ENCODE measurements at regions of chr2 and their contacts with region 1.

Region 1: DNA sequence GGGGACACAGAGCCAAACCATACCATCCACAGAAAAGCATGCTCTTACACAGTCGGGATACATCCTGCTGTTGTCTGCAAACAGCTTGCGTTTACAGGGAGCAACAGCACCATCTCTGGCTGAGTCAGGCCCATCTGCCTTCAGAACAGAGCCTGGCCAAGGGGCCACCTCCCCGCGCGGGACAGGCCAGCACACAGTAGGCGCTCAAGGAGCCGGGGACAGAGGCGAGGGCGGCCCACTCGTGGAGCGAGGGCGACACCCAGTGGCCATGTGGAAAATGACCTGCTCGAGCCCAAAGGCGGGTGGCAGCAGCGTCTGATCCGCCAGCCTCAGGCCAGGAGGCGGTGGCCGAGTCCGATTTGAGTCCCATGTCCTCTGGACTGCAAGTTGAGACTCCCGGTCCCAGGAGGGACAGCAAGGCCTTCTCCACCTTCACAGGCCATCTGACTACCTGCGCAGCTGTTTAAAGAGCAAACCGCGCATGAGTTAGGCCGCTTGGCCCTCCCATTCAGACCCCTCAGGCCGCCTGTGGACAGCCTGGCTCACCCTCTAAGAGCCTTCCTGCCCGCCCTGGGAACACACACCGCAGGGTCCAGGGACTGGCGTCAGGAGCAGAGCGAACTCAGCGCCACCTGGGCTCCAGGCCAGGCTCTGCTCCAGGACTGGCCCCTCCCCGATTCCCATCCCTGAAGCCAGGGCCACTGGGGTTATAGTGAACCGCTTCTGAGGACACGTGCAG is 38.3 kb downstream of the TTC32 start:
- DNase-seq: no peak
- H3K4me3 ChIP-seq: peak overlapping the region in 2 of 4 donors; percentile 15 to 19
- H3K27ac ChIP-seq: no peak overlapping the region
- H3K4me1 ChIP-seq: peaks cover 3 to 42% (median 31%) of the 10 kb centered on the region in 4 donors
- H3K27me3 ChIP-seq: peaks cover 0 to 2% (median 0%) of the 10 kb centered on the region in 4 donors
- CTCF ChIP-seq: peak; percentile 92 to 97 (median 93)
- EP300 ChIP-seq: no peak
- POLR2A ChIP-seq: no peak

Region 2: GRCh38 chr2:18387441-18388206 is 1475.8 kb before region 1 on chr2:
- intact Hi-C with region 1: loop called (anchors 5 kb)
- DNase-seq: peak; percentile 97
- H3K4me3 ChIP-seq: no peak overlapping the region
- H3K27ac ChIP-seq: peak overlapping the region; percentile 63 to 79 (median 70)
- H3K4me1 ChIP-seq: peaks cover 0 to 26% (median 20%) of the 10 kb centered on the region in 4 donors
- H3K27me3 ChIP-seq: no peaks in the 10 kb centered on the region
- CTCF ChIP-seq: peak; percentile 92 to 98 (median 94)
- EP300 ChIP-seq: no peak
- POLR2A ChIP-seq: no peak

Region 3: DNA sequence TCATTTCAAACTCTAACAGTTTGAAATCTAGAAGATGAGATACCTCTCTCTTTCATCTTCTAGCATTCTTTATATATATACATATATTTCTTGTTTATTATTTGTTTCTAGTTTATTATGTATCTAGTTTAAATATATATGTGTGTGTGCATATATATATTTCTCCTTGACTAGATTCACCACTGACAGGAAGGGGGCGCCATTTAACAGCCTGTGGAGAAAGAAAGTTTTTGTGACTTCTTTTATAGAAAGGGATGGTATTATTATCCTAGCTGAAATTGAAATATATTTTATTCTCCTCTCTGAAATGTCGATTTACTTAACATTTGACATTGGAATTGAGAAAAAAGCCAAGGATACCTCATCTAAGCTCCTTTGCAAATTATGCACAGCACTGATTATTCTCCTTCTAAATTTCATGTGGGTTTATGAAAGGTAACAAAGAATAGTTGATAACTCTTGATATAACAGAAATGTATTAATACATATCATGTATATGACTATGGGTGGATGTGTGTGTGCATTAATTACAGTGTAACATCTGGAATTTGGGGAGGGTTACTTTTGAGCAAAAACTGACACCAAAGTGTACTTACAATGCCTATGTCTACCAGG is 1113.5 kb before region 1 on chr2:
- intact Hi-C with region 1: loop called (anchors 5 kb)
- DNase-seq: no peak
- H3K4me3 ChIP-seq: no peak overlapping the region
- H3K27ac ChIP-seq: peak overlapping the region in 2 of 4 donors; percentile 54 to 64
- H3K4me1 ChIP-seq: peaks cover 0 to 48% (median 30%) of the 10 kb centered on the region in 4 donors
- H3K27me3 ChIP-seq: no peaks in the 10 kb centered on the region
- CTCF ChIP-seq: peak; percentile 78 to 86 (median 81)
- EP300 ChIP-seq: no peak
- POLR2A ChIP-seq: no peak

Region 4: GRCh38 chr2:19086231-19086651 is 777.2 kb before region 1 on chr2:
- intact Hi-C with region 1: no loop called
- DNase-seq: no peak
- H3K4me3 ChIP-seq: no peak overlapping the region
- H3K27ac ChIP-seq: no peak overlapping the region
- H3K4me1 ChIP-seq: peaks cover 0 to 7% (median 0%) of the 10 kb centered on the region in 4 donors
- H3K27me3 ChIP-seq: no peaks in the 10 kb centered on the region
- CTCF ChIP-seq: no peak
- EP300 ChIP-seq: no peak
- POLR2A ChIP-seq: no peak

Region 5: GRCh38 chr2:19349911-19350677 is 513.4 kb before region 1 on chr2:
- intact Hi-C with region 1: loop called (anchors 5 kb)
- DNase-seq: peak; percentile 92
- H3K4me3 ChIP-seq: peak overlapping the region; percentile 33 to 90 (median 43)
- H3K27ac ChIP-seq: peak overlapping the region; percentile 87 to 94 (median 91)
- H3K4me1 ChIP-seq: peaks cover 26 to 82% (median 71%) of the 10 kb centered on the region in 4 donors
- H3K27me3 ChIP-seq: peaks cover 0 to 28% (median 0%) of the 10 kb centered on the region in 4 donors
- CTCF ChIP-seq: peak; percentile 81 to 89 (median 82)
- EP300 ChIP-seq: no peak
- POLR2A ChIP-seq: no peak

Measured in esophagus muscularis mucosa (tissue), 4 donors.